ENCODE measurements at regions of chr2 and their contacts with region 1.

Region 1: DNA sequence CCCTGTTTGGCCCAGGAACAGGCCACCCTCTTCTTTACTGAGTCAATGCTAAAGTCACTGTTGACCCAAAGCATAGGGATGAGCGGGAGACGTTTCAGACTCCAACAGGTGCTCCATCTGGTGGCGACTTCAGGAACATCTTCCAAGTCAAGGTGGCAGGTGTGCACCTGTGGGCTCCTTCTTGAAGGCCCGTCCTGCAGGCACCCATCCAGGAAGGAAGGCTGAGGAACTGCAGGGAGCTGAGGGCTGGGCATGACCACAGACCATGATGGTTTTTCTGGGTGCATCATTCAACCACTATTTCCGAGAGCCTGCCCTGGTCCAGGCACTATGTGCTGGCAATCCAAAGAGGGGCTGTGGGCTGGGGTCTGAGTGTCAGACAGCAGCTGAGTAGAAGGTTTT is 142.8 kb downstream of the NDUFA10 start:
- DNase-seq: no peak
- ATAC-seq: peak; percentile 54 to 86 (median 80)
- H3K4me3 ChIP-seq: no peak overlapping the region
- H3K27ac ChIP-seq: no peak overlapping the region
- H3K4me1 ChIP-seq: peaks cover 3% of the 10 kb centered on the region
- H3K27me3 ChIP-seq: no peaks in the 10 kb centered on the region
- CTCF ChIP-seq: peak; percentile 65

Region 2: GRCh38 chr2:239035361-239036078 is 846.8 kb before region 1 on chr2:
- intact Hi-C with region 1: loop called (anchors 2 to 10 kb)
- DNase-seq: peak; percentile 55 to 83
- ATAC-seq: peak; percentile 79 to 95 (median 88)
- H3K4me3 ChIP-seq: no peak overlapping the region
- H3K27ac ChIP-seq: no peak overlapping the region
- H3K4me1 ChIP-seq: peaks cover 6% of the 10 kb centered on the region
- H3K27me3 ChIP-seq: peaks cover 0 to 3% (median 3%) of the 10 kb centered on the region in 3 donors
- CTCF ChIP-seq: peak; percentile 86

Region 3: DNA sequence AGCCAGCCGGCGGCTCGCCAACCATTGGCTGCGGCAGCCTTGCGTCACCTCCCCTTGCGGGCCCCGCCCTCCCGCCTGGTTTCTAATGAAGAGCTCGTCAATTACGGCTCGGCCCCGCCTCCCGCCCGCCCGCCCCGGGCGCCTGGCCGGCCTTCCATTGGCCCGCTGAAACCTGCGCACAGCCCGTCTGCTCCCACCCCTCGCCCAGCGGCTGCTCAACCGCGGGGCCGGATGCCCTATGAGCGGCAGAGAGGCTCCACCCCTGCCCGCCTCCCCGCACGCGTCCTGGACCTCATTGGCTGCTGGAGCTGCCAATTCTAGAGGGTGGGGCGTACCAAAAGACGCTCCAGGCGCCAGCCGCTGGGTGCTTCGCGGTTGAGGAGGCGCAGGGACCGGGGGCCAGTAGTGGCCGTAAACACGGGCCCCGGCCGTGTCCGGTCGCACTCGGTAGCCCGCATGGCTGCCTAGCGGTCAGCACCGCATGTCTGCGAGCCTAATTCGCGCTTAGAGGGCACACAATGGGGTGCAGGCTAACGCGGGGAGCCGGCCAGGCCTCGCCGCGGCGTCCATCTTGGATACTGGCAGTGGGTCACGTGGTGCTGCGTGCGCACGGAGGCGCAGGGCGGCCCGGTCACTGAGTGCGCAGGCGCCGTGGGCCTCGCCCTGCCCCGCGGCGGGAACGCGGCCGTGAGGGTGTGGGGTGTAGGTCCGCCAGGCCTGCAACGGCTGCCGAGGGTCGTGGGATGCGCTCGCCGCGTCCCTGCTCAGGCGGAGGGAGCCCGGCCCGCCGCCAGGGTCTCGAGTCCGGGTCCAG is 481.1 kb before region 1 on chr2:
- intact Hi-C with region 1: loop called in 1 of 2 experiments (anchors 5 kb)
- DNase-seq: peak; percentile 99 to 100
- ATAC-seq: peak; percentile 90 to 95 (median 93)
- H3K4me3 ChIP-seq: peak overlapping the region; percentile 79
- H3K27ac ChIP-seq: peak overlapping the region; percentile 100
- H3K4me1 ChIP-seq: peaks cover 28% of the 10 kb centered on the region
- H3K27me3 ChIP-seq: no peaks in the 10 kb centered on the region
- CTCF ChIP-seq: no peak

Region 4: GRCh38 chr2:239586651-239587310 is 295.6 kb before region 1 on chr2:
- intact Hi-C with region 1: loop called in 1 of 2 experiments (anchors 10 kb)
- DNase-seq: peak in 1 of 2 donors; percentile 40
- ATAC-seq: peak; percentile 41 to 84 (median 75)
- H3K4me3 ChIP-seq: no peak overlapping the region
- H3K27ac ChIP-seq: no peak overlapping the region
- H3K4me1 ChIP-seq: no peaks in the 10 kb centered on the region
- H3K27me3 ChIP-seq: no peaks in the 10 kb centered on the region
- CTCF ChIP-seq: no peak

Region 5: GRCh38 chr2:239688122-239688681 is 194.1 kb before region 1 on chr2:
- intact Hi-C with region 1: loop called in 1 of 2 experiments (anchors 10 kb)
- DNase-seq: no peak
- ATAC-seq: peak in 2 of 4 donors; percentile 35 to 48
- H3K4me3 ChIP-seq: no peak overlapping the region
- H3K27ac ChIP-seq: no peak overlapping the region
- H3K4me1 ChIP-seq: peaks cover 21% of the 10 kb centered on the region
- H3K27me3 ChIP-seq: no peaks in the 10 kb centered on the region
- CTCF ChIP-seq: no peak